Activated naive CD4-positive, alpha-beta T cell treated with anti-CD3 and anti-CD28 coated beads for 36 hours (primary cell): ENCODE measurements at regions of chr6 and their contacts with region 1.

Region 1: DNA sequence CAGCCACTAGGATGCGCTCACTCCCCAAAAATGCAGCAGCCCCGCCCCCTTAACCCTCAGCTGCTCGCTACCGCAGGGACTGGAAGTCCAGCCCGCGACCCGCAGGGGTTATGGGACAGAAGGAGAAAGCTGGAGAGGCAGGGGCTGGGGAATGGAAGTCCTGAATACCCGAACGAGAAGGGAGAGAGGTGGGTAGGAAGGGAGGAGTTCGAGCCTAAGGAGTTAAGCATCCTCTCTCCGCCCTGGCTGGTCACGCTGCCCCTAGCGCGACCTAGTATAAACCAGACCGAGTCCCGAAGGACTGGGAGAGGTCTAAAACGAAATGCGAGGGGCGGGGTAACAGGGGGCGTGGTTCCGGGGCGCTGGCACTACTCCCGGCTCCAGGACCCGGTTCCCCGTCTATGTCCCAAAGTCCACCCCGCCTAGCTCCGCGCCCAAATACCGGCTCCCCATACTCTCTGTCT is 448 bp upstream of the DDAH2 start:
- DNase-seq: peak; percentile 81
- H3K4me3 Mint-ChIP-seq: peak overlapping the region; percentile 79
- H3K27ac Mint-ChIP-seq: peak overlapping the region; percentile 72
- H3K4me1 Mint-ChIP-seq: peaks cover 59% of the 10 kb centered on the region
- H3K27me3 Mint-ChIP-seq: no peaks in the 10 kb centered on the region

Region 2: GRCh38 chr6:31639449-31639861 is 90.1 kb before region 1 on chr6:
- CTCF ChIA-PET with region 1: no interaction called
- intact Hi-C with region 1: no loop called
- DNase-seq: no peak
- H3K4me3 Mint-ChIP-seq: no peak overlapping the region
- H3K27ac Mint-ChIP-seq: peak overlapping the region; percentile 51
- H3K4me1 Mint-ChIP-seq: peaks cover 1% of the 10 kb centered on the region
- H3K27me3 Mint-ChIP-seq: no peaks in the 10 kb centered on the region

Region 3: GRCh38 chr6:31713991-31714684 is 15.4 kb before region 1 on chr6:
- CTCF ChIA-PET with region 1: interaction called, 12 read pairs
- intact Hi-C with region 1: no loop called
- DNase-seq: no peak
- H3K4me3 Mint-ChIP-seq: no peak overlapping the region
- H3K27ac Mint-ChIP-seq: no peak overlapping the region
- H3K4me1 Mint-ChIP-seq: peaks cover 8% of the 10 kb centered on the region
- H3K27me3 Mint-ChIP-seq: no peaks in the 10 kb centered on the region

Region 4: DNA sequence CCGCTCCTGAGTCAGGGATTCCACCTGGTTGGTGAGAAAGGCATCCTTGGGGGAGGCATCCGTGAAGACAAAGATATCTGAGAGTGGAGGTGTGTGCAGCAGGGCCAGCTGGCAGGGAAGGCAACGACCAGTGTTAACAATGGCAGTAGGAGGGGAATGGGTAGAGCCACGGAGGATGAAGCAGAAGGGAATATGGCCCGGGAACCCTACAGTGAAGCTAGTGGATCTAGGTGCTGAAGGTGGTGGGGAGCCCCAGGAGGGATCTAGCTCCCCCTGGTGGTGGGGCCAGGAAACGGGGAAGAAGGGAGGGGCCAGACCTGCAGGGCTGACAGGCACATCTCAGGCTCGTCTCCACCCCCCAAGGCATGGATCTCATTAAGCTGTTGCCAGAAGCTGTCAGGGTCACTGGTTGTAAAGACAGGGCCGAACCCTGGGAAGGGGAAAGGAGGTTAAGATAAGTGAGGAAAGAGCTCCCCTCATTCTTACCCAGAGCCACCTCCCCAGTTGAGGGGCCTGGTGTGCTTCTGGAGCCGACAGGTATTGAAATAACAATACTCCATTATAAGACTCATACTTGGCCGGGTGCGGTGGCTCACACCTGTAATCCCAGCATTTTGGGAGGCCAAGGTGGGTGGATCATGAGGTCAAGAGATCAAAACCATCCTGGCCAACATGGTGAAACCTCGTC is 40.3 kb after region 1 on chr6:
- CTCF ChIA-PET with region 1: interaction called, 10 read pairs
- intact Hi-C with region 1: loop called (anchors 1 kb)
- DNase-seq: peak; percentile 86
- H3K4me3 Mint-ChIP-seq: no peak overlapping the region
- H3K27ac Mint-ChIP-seq: no peak overlapping the region
- H3K4me1 Mint-ChIP-seq: peaks cover 27% of the 10 kb centered on the region
- H3K27me3 Mint-ChIP-seq: no peaks in the 10 kb centered on the region

Region 5: GRCh38 chr6:32153564-32154513 is 424.3 kb after region 1 on chr6 and contains the start of gene PPT2:
- CTCF ChIA-PET with region 1: no interaction called
- intact Hi-C with region 1: no loop called
- DNase-seq: peak; percentile 90
- H3K4me3 Mint-ChIP-seq: peak within 1 kb of the TSS; percentile 99
- H3K27ac Mint-ChIP-seq: peak within 1 kb of the TSS; percentile 88
- H3K4me1 Mint-ChIP-seq: peaks cover 46% of the 10 kb centered on the region
- H3K27me3 Mint-ChIP-seq: peaks cover 7% of the 10 kb centered on the region
- total RNA-seq, gene PPT2: 13.2 to 14.8 TPM